IMR-90 (cell line): ENCODE measurements at regions of chr1 and their contacts with region 1.

Region 1: GRCh38 chr1:231357831-231358354 is 19.8 kb downstream of the SPRTN start:
- DNase-seq: peak; percentile 79
- ATAC-seq: peak; percentile 75
- H3K4me3 ChIP-seq: no peak overlapping the region
- H3K27ac ChIP-seq: no peak overlapping the region
- H3K4me1 ChIP-seq: peaks cover 5% of the 10 kb centered on the region
- H3K27me3 ChIP-seq: no peaks in the 10 kb centered on the region
- CTCF ChIP-seq: peak; percentile 87
- POLR2A ChIP-seq: peak; percentile 37; the same call in 1 of the 2 replicates
- RAD21 ChIP-seq: peak; percentile 92

Region 2: GRCh38 chr1:231528172-231529029 is 170.5 kb after region 1 on chr1 and contains the start of gene TSNAX:
- CTCF ChIA-PET with region 1: interaction called, 4 read pairs
- POLR2A ChIA-PET with region 1: no interaction called
- dilution Hi-C with region 1: no loop called
- in situ Hi-C with region 1: no loop called
- intact Hi-C with region 1: loop called (anchors 2 kb)
- DNase-seq: peak; percentile 92
- ATAC-seq: peak; percentile 99
- H3K4me3 ChIP-seq: peak within 1 kb of the TSS; percentile 75
- H3K27ac ChIP-seq: peak within 1 kb of the TSS; percentile 89
- H3K4me1 ChIP-seq: peaks cover 5% of the 10 kb centered on the region
- H3K27me3 ChIP-seq: no peaks in the 10 kb centered on the region
- CTCF ChIP-seq: no peak
- POLR2A ChIP-seq: peak; percentile 81
- RAD21 ChIP-seq: no peak; the same call in 1 of the 2 replicates
- total RNA-seq, gene TSNAX: 60.6 and 61.4 TPM in 2 replicates

Region 3: DNA sequence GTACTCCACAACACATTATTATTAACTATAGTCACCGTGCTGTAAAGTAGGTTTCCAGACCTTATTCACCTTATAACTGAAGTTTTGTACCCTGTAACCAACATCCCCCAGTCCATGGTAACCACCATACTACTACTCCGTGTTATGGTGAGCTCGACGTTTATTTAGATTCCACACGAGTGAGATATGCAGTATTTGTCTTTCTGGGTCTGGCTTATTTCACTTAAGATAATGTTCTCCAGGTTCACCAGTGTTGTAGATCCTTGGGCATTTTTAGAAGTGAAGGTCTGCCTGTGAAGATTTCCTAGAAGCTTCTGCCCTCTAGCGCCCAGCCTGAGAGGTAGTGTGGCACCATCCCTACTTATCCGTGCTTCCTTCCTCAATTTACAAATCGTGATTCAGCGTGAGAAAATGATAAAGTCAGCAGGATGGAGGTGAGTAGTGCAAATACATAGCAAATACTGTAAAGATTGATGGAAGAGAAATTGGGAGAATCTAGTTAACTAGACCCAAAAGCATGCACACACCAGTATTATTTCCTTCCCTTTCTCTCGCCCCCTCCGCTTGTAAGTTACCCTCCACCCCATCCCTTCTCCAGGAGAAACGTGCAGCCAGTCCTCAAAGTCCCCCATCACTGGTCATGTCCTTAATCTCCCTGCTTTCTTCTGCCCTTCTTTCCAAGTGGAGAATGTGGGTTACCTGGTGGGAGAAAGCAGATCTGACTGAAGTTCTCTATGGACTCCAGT is 232.7 kb after region 1 on chr1:
- CTCF ChIA-PET with region 1: interaction called, 3 read pairs
- POLR2A ChIA-PET with region 1: no interaction called
- dilution Hi-C with region 1: no loop called
- in situ Hi-C with region 1: loop called (anchors 5 kb)
- intact Hi-C with region 1: loop called (anchors 1 kb)
- DNase-seq: peak; percentile 83
- ATAC-seq: peak; percentile 99
- H3K4me3 ChIP-seq: no peak overlapping the region
- H3K27ac ChIP-seq: no peak overlapping the region
- H3K4me1 ChIP-seq: no peaks in the 10 kb centered on the region
- H3K27me3 ChIP-seq: no peaks in the 10 kb centered on the region
- CTCF ChIP-seq: peak; percentile 79
- POLR2A ChIP-seq: 0 out of 2 replicates have a peak, but pooled peaks have one; percentile 23
- RAD21 ChIP-seq: peak; percentile 82

Region 4: GRCh38 chr1:231757101-231757404 is 399.2 kb after region 1 on chr1:
- CTCF ChIA-PET with region 1: no interaction called
- POLR2A ChIA-PET with region 1: no interaction called
- dilution Hi-C with region 1: no loop called
- in situ Hi-C with region 1: no loop called
- intact Hi-C with region 1: loop called (anchors 5 kb)
- DNase-seq: no peak
- ATAC-seq: peak; percentile 53
- H3K4me3 ChIP-seq: no peak overlapping the region
- H3K27ac ChIP-seq: no peak overlapping the region
- H3K4me1 ChIP-seq: no peaks in the 10 kb centered on the region
- H3K27me3 ChIP-seq: no peaks in the 10 kb centered on the region
- CTCF ChIP-seq: no peak
- POLR2A ChIP-seq: no peak
- RAD21 ChIP-seq: no peak